CD8-positive, alpha-beta T cell (primary cell): ENCODE measurements at regions of chr12 and their contacts with region 1.

Region 1: DNA sequence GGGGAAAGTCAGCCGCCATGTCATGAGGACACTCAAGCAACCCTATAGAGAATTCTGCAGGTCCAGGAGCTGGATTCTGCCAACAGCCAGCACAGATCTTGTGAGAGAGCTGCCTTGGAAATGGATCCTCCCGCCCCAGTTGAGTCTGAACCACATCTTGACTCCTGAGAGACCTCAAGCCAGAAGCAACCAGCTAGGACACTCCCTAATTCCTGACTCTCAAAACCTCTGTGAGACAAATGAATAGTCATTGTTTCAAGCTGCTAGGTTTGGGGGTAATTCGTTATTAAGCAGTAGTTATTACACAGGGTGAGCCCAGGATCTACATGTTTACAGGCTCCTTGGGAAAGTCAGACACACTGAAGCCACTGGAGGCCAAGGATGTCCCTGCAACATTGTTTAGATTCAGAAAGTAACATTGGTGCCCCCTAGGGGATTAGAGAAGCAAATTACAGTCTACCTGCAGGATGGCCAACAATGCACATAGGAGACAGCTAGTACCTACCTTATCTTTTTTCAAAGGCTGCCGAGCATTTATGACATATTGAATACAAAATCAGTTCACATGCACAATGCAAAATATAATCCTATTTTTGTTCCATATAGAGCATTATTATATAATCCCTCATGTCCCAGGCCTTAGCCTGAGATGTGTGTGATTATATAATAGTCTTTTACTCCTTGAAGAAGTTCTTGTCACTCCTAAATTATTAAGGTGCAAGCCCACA is 57.9 kb upstream of the FICD start:
- DNase-seq: peak in 2 of 9 experiments; percentile 43 to 50
- ATAC-seq: no peak
- H3K4me3 ChIP-seq: no peak overlapping the region
- H3K4me3 Mint-ChIP-seq: no peak overlapping the region
- H3K27ac ChIP-seq: no peak overlapping the region
- H3K27ac Mint-ChIP-seq: no peak overlapping the region
- H3K4me1 ChIP-seq: no peaks in the 10 kb centered on the region
- H3K4me1 Mint-ChIP-seq: no peaks in the 10 kb centered on the region
- H3K27me3 ChIP-seq: no peaks in the 10 kb centered on the region
- H3K27me3 Mint-ChIP-seq: peaks cover 26% of the 10 kb centered on the region
- CTCF ChIP-seq: peak; percentile 59

Region 2: DNA sequence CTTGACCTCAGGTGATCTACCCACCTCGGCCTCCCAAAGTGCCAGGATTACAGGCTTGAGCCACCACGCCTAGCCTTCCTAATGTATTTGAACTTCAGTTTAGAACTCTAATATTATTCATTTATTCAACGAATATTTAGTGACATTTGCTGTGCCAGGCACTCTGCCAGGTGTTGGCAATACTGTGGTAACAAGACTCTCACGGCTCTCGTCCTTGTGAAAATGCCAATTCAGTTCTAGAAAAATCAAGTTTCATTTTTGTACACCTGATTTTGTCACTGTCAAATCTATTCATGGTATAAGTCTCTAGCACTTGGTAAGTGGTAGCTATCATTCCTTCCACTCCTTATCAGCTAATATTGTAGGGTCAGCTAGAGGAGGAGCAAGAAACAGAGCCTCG is 777.8 kb before region 1 on chr12:
- CTCF ChIA-PET with region 1: no interaction called
- POLR2A ChIA-PET with region 1: no interaction called
- intact Hi-C with region 1: loop called in 1 of 2 experiments (anchors 5 kb)
- DNase-seq: no peak
- ATAC-seq: no peak
- H3K4me3 ChIP-seq: no peak overlapping the region
- H3K4me3 Mint-ChIP-seq: no peak overlapping the region
- H3K27ac ChIP-seq: no peak overlapping the region
- H3K27ac Mint-ChIP-seq: no peak overlapping the region
- H3K4me1 ChIP-seq: no peaks in the 10 kb centered on the region
- H3K4me1 Mint-ChIP-seq: peaks cover 1% of the 10 kb centered on the region
- H3K27me3 ChIP-seq: no peaks in the 10 kb centered on the region
- H3K27me3 Mint-ChIP-seq: peaks cover 14% of the 10 kb centered on the region
- CTCF ChIP-seq: no peak

Region 3: GRCh38 chr12:107992870-107993451 is 464.2 kb before region 1 on chr12:
- CTCF ChIA-PET with region 1: interaction called, 6 read pairs
- POLR2A ChIA-PET with region 1: no interaction called
- intact Hi-C with region 1: loop called in 1 of 2 experiments (anchors 5 kb)
- DNase-seq: peak in 2 of 9 experiments; percentile 8 to 12
- ATAC-seq: no peak
- H3K4me3 ChIP-seq: no peak overlapping the region
- H3K4me3 Mint-ChIP-seq: no peak overlapping the region
- H3K27ac ChIP-seq: no peak overlapping the region
- H3K27ac Mint-ChIP-seq: no peak overlapping the region
- H3K4me1 ChIP-seq: no peaks in the 10 kb centered on the region
- H3K4me1 Mint-ChIP-seq: no peaks in the 10 kb centered on the region
- H3K27me3 ChIP-seq: no peaks in the 10 kb centered on the region
- H3K27me3 Mint-ChIP-seq: peaks cover 17% of the 10 kb centered on the region
- CTCF ChIP-seq: no peak

Region 4: GRCh38 chr12:108241986-108242703 is 215.0 kb before region 1 on chr12:
- CTCF ChIA-PET with region 1: interaction called, 5 read pairs
- POLR2A ChIA-PET with region 1: no interaction called
- intact Hi-C with region 1: loop called in 1 of 2 experiments (anchors 10 kb)
- DNase-seq: no peak
- ATAC-seq: no peak
- H3K4me3 ChIP-seq: no peak overlapping the region
- H3K4me3 Mint-ChIP-seq: no peak overlapping the region
- H3K27ac ChIP-seq: no peak overlapping the region
- H3K27ac Mint-ChIP-seq: no peak overlapping the region
- H3K4me1 ChIP-seq: no peaks in the 10 kb centered on the region
- H3K4me1 Mint-ChIP-seq: no peaks in the 10 kb centered on the region
- H3K27me3 ChIP-seq: no peaks in the 10 kb centered on the region
- H3K27me3 Mint-ChIP-seq: peaks cover 30% of the 10 kb centered on the region
- CTCF ChIP-seq: no peak